GM10248 (cell line): ENCODE measurements at regions of chr1 and their contacts with region 1.

Region 1: DNA sequence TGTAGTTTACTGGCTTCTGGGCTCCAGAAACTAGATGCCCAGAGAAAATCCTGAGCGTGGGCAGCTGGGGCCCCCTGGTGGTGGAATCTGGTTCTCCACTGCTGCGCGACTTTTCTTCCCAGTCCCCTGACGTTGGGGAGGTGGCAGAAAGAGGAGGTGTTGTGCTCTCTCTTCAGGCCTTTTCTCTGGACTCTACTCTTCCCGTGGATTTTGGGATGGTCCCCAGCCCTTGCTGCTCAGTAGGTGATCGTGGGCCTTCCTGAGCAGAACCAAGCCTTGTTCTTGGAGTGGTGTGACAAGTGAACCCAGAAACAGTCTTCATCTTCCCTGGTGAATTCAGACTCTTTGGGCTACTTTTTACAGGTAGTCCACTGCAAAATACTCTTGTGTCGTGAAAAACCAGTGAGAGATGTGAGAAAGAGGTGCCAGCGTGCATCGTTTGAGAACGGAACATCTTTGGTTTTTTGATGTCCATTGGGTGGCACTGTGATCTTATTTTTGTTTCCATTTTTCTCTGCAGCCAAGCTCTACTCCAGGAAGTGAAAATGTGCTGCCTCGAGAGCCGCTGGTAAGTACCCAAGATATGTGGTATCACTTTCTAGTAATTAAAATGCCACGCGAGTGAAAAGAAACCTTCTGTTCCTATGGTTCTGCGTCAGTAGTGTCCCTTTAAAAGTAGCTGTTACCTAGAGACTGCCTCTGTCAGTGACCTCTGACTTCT is 20.2 kb downstream of the PEX14 start:
- DNase-seq: peak; percentile 83
- CTCF ChIP-seq: peak; percentile 90

Region 2: DNA sequence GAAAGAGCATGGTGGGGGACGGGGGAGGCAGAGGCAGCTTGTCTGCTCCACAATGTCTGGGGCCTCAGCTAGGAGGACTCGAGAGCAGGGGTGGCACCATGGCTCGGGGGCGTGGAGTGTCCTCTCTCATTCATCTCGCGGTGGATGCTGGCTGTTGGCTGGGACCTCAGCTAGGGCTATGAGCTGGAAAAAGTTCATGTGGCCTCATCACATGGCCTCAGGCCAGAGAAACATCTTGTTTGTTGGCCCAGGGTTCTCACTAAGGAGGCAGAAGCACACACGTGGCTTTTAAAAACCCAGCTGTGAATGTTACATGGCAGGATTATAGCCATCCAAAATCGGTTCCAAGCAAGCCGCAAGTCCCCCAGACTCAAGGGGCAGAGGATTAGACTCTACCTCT is 70.9 kb before region 1 on chr1:
- CTCF ChIA-PET with region 1: interaction called, 147 read pairs
- POLR2A ChIA-PET with region 1: no interaction called
- DNase-seq: no peak
- CTCF ChIP-seq: no peak

Region 3: GRCh38 chr1:10472220-10473144 is 22.4 kb before region 1 on chr1 and contains the start of gene DFFA:
- CTCF ChIA-PET with region 1: interaction called, 18 read pairs
- POLR2A ChIA-PET with region 1: no interaction called
- DNase-seq: peak; percentile 95
- CTCF ChIP-seq: no peak

Region 4: GRCh38 chr1:10507111-10507879 is 12.4 kb after region 1 on chr1:
- CTCF ChIA-PET with region 1: interaction called, 105 read pairs
- POLR2A ChIA-PET with region 1: no interaction called
- DNase-seq: peak; percentile 74
- CTCF ChIP-seq: peak; percentile 80

Region 5: DNA sequence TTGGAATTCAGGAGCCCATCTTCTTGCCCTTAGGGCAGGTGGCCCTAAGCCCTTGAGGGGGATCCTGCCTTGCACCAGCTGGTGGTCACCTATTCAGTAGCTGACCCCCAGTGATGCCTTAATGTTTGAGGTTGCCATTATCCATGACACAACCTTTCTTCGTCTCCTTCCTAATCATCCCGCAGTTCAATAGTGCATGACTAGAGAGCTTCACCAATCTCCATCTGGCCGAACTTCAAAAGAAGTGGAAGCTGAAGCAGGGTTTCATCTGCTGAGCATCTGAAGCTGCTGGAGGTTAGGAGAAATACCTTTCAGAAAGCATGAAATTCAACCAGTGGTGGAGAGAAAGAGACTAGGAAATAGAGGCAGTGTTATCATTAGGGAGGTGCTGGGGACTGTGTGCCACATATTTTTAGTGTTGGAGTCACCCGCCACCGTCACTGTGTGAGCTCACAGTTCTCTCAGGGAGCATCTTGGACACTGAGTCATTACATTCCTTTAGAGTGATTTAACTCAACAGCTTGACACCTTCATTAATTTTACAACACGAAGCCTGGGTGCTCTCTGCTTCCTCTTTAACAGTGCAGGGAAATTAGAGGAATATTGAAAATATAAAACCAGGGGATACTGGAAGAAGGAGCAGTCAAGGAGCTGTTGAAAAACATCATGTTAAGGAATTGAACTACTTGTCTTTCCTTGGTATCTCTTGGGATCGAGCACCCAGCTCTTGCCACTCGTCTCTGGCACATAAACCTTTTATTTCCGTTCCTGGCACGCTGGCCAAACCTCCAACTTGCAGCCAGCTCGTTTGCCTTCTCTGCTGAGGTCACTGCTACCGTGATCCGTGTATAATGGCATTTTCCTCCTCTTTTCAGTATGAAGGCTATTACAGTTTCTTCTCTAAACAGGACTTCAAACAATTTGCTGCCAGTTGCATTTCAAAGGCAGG is 33.4 kb after region 1 on chr1:
- CTCF ChIA-PET with region 1: interaction called, 11 read pairs
- POLR2A ChIA-PET with region 1: no interaction called
- DNase-seq: no peak
- CTCF ChIP-seq: no peak